Dorsolateral prefrontal cortex (tissue), 120 donors: ENCODE measurements at regions of chr1 and their contacts with region 1.

Region 1: DNA sequence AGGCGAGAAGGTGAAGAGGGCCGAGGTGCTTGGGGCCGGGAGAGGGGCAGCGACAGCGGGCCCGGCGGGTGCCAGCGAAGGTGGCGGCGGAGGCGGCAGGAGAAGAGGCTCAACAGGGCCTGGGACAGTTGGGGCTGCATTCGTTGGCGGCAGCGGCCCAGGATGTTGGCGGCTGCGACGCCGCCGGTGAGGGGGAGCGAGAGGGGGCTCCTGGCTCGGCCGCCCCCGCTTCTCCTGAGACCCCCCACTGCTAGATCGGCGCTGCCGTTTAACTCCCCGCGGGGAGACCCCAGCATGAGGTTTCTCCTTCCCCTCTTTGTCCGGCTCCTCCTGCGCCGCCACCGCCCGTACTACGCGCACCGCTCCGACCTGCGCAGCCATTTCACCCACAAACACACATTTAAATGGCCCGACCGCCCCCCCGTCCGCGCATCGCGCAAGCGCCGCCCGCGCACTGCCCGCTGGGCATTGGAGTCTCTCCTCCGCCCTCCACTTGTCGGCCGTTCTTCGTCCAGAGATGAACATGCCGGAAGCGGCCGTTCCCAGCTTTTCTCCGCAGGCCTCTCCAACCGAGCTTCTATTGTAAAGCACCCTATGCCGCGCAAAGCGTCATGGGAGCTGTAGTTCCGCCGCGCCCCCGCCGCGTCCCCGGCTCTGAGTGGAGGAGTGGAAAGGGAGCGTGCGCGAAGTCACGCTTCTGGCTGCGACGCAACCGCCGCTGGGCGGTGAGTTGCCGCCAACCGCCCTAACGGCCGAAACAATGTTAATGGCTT is at the start of gene RSBN1:
- DNase-seq: peak; percentile 97 to 100 (median 99)
- H3K4me3 ChIP-seq: peak within 1 kb of the TSS; percentile 70 to 99 (median 93)
- H3K27ac ChIP-seq: peak within 1 kb of the TSS; percentile 76 to 98 (median 93)
- H3K27me3 ChIP-seq: no peaks in the 10 kb centered on the region
- CTCF ChIP-seq: peak in 47 of 56 donors; percentile 11 to 63 (median 42)
- total RNA-seq, gene RSBN1: 17.8 to 36.6 (median 24.2) TPM

Region 2: DNA sequence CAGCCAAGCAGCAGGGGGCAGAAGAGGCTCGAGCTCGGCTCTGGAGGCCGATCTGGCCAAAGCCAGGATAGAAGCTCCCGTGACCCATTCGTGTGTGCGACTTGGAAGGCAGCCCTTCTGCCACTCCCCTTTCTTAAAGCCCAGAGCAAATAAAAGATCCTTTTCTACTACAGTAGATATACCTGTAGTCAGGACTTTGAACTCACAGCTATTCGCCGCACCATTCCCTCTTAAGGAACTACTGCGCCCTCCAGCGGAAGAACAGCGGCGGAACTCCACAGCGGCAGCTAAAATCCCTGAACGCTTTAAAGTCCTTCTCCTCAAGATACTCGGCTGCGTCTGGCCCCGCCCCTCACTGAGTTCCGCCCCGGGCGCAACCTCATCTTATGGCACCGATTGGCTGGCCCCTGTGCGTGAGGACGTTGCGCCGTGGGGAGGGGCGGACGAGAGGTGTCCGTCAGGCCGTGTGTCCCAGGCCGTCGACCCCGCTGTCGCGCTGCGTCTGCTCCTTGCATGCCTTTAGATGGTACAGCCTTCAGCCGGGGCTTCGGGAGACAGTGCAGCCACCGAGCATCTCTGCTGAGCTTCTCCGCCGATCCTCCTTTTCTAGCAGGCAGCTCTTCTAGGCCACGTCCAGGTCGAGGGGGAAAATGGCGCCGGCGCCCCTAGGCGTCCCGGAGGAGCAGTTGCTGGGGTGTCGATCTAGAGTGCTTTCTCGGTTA is 739.2 kb before region 1 on chr1 and contains the start of gene LRIG2:
- intact Hi-C with region 1: loop called in 1 of 2 experiments (anchors 5 kb)
- DNase-seq: peak; percentile 96 to 99 (median 98)
- H3K4me3 ChIP-seq: peak within 1 kb of the TSS; percentile 68 to 99 (median 90)
- H3K27ac ChIP-seq: peak within 1 kb of the TSS; percentile 61 to 98 (median 91)
- H3K27me3 ChIP-seq: no peaks in the 10 kb centered on the region
- CTCF ChIP-seq: peak; percentile 67 to 98 (median 91)
- total RNA-seq, gene LRIG2: 12.1 to 32.7 (median 20.4) TPM

Region 3: DNA sequence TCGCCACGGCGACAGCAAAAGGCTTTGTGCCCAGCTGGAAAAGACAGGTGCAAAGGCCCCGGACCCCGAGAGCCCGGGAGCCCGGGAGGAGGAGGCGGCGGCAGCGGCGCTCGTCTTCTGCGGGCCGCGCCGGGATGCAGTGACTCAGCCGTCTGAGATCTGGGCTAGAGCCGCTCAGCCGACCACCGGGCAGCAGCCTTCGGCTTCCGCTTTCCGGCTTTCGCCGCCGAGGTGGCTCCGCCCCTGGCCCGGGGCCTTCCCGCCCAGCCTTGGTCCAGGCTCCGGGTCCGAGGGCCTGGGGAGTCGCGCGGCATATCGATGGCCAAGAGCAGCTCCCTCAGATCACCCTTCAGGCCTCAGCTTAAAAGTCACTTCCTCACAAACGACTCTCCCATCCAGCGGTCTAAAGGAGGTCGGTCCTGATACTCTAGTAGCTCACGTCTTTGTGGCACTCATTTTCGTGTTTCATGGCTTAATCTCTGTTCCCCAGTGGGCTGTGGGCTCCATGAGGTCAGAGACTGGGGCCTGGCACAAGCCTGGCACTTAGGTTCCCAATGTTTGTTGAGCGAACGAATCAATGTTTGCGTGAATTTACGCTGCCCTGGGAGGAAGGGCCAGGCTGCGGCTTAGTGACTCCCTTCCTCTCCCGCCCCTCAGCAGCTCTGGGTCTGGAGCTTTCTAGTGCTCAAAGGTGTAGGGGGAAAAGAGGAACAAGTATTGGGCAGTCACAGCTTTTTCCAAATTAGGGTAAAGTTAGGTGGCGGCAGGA is 52.6 kb before region 1 on chr1 and contains the start of gene PHTF1:
- intact Hi-C with region 1: loop called (anchors 1 to 5 kb)
- DNase-seq: peak; percentile 33 to 76 (median 58)
- H3K4me3 ChIP-seq: peak within 1 kb of the TSS; percentile 60 to 98 (median 88)
- H3K27ac ChIP-seq: peak within 1 kb of the TSS; percentile 48 to 98 (median 93)
- H3K27me3 ChIP-seq: no peaks in the 10 kb centered on the region
- CTCF ChIP-seq: no peak
- total RNA-seq, gene PHTF1: 19.2 to 58.0 (median 40.1) TPM

Region 4: DNA sequence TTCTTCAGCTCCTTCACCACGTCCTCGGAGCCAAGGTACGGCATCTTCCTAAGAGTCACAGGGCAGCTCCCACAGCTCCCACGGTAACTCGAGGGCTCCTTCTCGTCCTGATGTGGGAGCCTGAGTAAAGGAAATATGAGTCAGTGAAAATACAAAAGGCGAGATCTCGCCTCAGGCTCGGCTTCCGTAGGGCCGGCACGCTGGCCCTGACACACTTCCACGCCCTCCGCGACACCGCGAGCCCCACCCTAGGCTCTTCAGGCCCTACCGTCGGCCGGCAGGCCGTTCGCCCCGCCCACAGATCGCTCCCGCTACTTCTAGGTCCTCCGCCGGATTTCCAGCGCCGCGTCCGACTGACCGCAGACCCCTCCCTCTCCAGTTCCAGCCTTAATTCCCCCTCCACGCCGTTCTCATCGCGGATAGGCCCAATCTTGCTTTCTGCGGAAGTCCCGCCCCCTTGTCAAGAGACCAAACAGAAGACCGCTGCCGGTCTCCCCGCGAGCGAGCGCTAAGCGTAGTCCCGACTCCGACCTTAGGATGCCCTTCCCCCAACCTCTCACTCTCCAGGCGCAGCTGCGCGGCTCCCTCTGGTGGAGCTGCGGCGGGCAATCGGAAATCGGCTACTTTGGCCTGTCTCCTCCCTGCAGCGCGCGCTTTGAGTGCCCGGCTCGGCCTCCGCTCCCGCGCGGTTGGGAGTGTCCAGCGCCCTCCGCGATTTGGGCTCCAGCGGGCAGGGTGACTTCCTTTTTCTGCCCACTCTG is 92.8 kb after region 1 on chr1 and contains the starts of genes AP4B1 and DCLRE1B:
- intact Hi-C with region 1: loop called (anchors 2 to 5 kb)
- DNase-seq: peak; percentile 91 to 98 (median 97)
- H3K4me3 ChIP-seq: peak within 1 kb of the TSS; percentile 69 to 99 (median 90)
- H3K27ac ChIP-seq: peak within 1 kb of the TSS; percentile 79 to 99 (median 96)
- H3K27me3 ChIP-seq: no peaks in the 10 kb centered on the region
- CTCF ChIP-seq: peak; percentile 60 to 94 (median 82)
- total RNA-seq, gene AP4B1: 26.7 to 71.0 (median 42.4) TPM
- total RNA-seq, gene DCLRE1B: 2.4 to 8.8 (median 4.9) TPM

Region 5: DNA sequence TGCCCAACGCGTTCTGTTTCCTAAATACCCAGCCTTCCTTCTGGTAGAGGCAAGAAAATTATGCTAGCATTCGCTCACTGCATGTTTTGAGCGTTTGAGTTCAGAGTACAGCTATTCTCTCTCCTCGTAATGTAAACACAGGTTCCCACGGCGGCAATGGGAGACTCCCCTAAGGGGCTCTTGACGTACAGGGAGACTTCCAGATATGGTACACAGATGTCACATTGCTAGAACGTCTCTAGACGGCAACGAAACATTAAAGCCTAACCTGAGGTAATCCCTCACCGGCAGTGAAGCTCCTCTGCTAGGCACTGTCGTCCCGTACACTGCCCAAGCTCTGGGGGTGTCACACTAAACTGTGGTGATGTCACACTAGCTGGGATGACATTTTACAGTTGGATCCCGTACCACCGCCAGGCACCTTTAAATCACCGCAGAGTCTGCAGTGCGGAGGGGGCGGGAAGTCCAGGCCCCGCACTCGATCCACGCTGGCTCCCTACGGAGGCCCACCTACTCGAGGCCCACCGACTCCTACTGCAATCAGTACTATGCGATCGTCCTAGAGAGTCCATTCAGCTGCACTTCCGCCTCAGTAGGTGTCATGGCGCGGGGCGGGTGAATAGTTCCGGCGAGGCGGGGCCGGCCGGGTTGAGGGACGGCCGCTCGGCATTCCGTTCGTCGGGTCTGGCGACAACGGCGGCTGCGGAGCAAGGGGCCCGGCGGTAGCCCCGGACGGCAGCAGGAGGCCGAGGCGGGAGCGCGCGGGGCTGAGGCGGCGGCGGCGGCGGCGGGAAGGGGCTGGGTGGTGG is 117.1 kb after region 1 on chr1 and contains the start of gene HIPK1:
- intact Hi-C with region 1: loop called (anchors 1 kb)
- DNase-seq: peak; percentile 82 to 96 (median 94)
- H3K4me3 ChIP-seq: peak within 1 kb of the TSS; percentile 61 to 98 (median 93)
- H3K27ac ChIP-seq: peak within 1 kb of the TSS; percentile 76 to 99 (median 94)
- H3K27me3 ChIP-seq: no peaks in the 10 kb centered on the region
- CTCF ChIP-seq: peak in 18 of 56 donors; percentile 5 to 49 (median 17)
- total RNA-seq, gene HIPK1: 78.9 to 158 (median 100) TPM